ENCODE measurements at regions of chr15 and their contacts with region 1.

Region 1: DNA sequence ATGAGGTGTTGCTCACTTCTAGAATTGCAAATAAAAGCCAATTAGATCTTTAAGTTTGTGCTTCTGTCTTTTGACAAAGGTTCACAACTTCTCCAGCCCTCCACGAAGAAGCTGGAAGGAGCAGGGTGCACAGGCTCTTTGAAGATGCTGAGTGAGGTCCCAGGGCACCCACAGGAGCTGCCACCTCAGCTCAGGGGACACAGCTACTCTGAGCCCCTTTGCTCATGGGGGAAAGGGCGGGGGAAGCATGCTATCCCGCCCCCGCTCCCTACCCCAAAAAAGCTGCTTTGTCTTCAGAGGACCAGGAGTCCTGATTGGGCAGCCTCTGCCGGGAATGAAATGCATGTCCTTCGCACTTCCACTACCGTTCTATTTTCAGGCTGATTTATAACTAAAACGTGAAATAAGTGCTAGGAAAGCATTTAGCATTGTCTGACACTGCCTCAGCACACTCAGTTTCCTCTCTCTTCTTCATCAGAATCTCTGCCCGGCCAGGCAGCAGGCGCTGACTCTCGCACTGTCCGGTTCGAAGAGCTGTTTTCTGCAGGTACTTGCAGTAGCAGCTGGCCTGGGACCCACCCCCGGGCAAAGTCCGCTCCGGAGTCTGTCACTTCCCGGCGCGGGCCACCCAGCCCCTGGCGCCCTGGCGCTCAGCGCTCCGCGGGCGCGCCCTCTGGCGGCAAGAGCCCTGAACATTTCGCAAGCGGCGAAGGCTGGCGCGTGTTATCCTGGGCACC is 45.5 kb upstream of the KLHL25 start:
- DNase-seq: peak; percentile 82
- H3K4me3 ChIP-seq: peak overlapping the region; percentile 17
- H3K27ac ChIP-seq: no peak overlapping the region
- H3K4me1 ChIP-seq: peaks cover 9% of the 10 kb centered on the region
- CTCF ChIP-seq: peak; percentile 95

Region 2: GRCh38 chr15:85618956-85619491 is 221.2 kb before region 1 on chr15:
- CTCF ChIA-PET with region 1: no interaction called
- POLR2A ChIA-PET with region 1: no interaction called
- intact Hi-C with region 1: loop called (anchors 5 kb)
- DNase-seq: no peak
- H3K4me3 ChIP-seq: no peak overlapping the region
- H3K27ac ChIP-seq: no peak overlapping the region
- H3K4me1 ChIP-seq: no peaks in the 10 kb centered on the region
- CTCF ChIP-seq: no peak

Region 3: GRCh38 chr15:85730001-85730820 is 110.0 kb before region 1 on chr15:
- CTCF ChIA-PET with region 1: no interaction called
- POLR2A ChIA-PET with region 1: no interaction called
- intact Hi-C with region 1: loop called (anchors 1 kb)
- DNase-seq: peak; percentile 74
- H3K4me3 ChIP-seq: no peak overlapping the region
- H3K27ac ChIP-seq: peak overlapping the region; percentile 16
- H3K4me1 ChIP-seq: no peaks in the 10 kb centered on the region
- CTCF ChIP-seq: peak; percentile 85

Region 4: GRCh38 chr15:85760531-85761371 is 79.5 kb before region 1 on chr15:
- CTCF ChIA-PET with region 1: no interaction called
- POLR2A ChIA-PET with region 1: no interaction called
- intact Hi-C with region 1: loop called (anchors 1 kb)
- DNase-seq: no peak
- H3K4me3 ChIP-seq: no peak overlapping the region
- H3K27ac ChIP-seq: no peak overlapping the region
- H3K4me1 ChIP-seq: no peaks in the 10 kb centered on the region
- CTCF ChIP-seq: peak; percentile 40; the same call in 1 of the 2 replicates

Region 5: GRCh38 chr15:85794603-85795336 is 45.5 kb before region 1 on chr15 and contains the start of gene KLHL25:
- CTCF ChIA-PET with region 1: no interaction called
- POLR2A ChIA-PET with region 1: no interaction called
- intact Hi-C with region 1: loop called (anchors 5 kb)
- DNase-seq: peak; percentile 96
- H3K4me3 ChIP-seq: peak within 1 kb of the TSS; percentile 90
- H3K27ac ChIP-seq: peak within 1 kb of the TSS; percentile 39
- H3K4me1 ChIP-seq: peaks cover 21% of the 10 kb centered on the region
- CTCF ChIP-seq: no peak
- total RNA-seq, gene KLHL25: 4.5 and 7.7 TPM in 2 replicates

Region 6: GRCh38 chr15:85920956-85921355 is 80.7 kb after region 1 on chr15:
- CTCF ChIA-PET with region 1: no interaction called
- POLR2A ChIA-PET with region 1: no interaction called
- intact Hi-C with region 1: no loop called
- DNase-seq: no peak
- H3K4me3 ChIP-seq: no peak overlapping the region
- H3K27ac ChIP-seq: no peak overlapping the region
- H3K4me1 ChIP-seq: no peaks in the 10 kb centered on the region
- CTCF ChIP-seq: no peak

Measured in OCI-LY7 (cell line).